ENCODE measurements at regions of chr17 and their contacts with region 1.

Region 1: DNA sequence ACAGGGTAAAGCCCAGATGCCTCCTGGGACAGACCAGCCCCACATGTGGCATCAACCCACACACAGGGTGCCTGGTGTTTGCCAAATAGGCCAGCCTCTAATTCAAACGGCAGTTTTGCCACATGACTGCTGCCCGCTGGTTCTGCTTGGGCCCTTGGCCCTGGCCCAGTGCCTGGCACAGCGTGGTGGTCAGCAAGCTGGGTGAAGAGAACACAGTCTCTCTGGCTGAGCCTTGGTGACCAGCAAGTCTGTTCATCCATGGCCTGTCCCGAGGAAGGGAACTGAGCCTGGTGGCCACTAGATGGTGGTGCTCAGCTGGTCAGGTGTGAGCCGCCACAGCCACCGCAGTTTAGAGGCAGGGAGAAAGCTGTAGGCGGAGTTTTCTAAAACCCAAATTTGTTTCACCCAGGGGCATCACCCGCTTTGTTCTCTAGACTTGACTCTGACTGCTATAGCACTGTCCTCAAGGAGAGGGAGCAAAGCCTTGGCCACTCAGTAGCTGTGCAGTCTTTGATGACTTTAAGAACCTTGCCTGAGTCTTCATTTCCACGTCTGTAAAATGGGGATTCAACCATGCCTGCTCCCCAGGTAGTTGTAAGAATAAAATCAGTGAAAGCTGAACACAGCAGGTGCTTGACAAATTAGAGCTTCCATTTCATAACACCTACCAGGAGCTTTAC is 4.7 kb upstream of the GFAP start:
- DNase-seq: peak; percentile 76
- H3K4me3 ChIP-seq: no peak overlapping the region
- H3K27ac ChIP-seq: no peak overlapping the region
- H3K4me1 ChIP-seq: peaks cover 8% of the 10 kb centered on the region
- H3K27me3 ChIP-seq: peaks cover 0 to 11% of the 10 kb centered on the region in 2 experiments
- CTCF ChIP-seq: peak; percentile 75 to 84
- POLR2A ChIP-seq: no peak

Region 2: DNA sequence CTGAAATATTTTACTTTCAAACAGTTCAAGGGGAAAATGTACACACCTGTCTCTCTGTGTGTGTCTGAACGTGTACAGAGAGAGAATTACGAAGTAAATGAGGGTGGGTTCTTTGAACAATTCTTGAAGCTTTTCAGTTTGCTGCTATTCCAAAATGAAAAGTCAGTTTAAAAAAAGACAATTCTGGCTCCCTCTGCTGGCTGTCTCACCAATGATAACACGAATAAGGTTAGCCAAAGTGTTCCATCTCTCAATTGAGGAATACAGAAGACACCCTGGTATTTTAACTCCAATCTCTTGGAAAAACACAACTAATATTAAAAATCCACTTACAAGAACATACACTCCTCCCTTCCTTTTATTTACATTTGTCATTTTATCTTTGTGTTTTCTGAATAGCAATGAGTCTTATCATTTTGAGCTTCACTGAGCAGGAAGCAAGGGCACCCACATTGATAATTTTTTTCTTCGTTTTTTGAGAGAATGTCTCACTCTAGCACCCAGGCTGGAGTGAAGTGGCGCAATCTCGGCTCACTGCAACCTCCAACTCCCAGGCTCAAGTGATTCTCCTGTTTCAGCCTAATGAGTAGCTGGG is 41.3 kb before region 1 on chr17:
- CTCF ChIA-PET with region 1: interaction called, 10 read pairs
- POLR2A ChIA-PET with region 1: no interaction called
- dilution Hi-C with region 1: no loop called
- intact Hi-C with region 1: no loop called
- DNase-seq: peak; percentile 49
- H3K4me3 ChIP-seq: no peak overlapping the region
- H3K27ac ChIP-seq: no peak overlapping the region
- H3K4me1 ChIP-seq: no peaks in the 10 kb centered on the region
- H3K27me3 ChIP-seq: no peaks in the 10 kb centered on the region
- CTCF ChIP-seq: peak; percentile 35 to 52
- POLR2A ChIP-seq: no peak

Region 3: DNA sequence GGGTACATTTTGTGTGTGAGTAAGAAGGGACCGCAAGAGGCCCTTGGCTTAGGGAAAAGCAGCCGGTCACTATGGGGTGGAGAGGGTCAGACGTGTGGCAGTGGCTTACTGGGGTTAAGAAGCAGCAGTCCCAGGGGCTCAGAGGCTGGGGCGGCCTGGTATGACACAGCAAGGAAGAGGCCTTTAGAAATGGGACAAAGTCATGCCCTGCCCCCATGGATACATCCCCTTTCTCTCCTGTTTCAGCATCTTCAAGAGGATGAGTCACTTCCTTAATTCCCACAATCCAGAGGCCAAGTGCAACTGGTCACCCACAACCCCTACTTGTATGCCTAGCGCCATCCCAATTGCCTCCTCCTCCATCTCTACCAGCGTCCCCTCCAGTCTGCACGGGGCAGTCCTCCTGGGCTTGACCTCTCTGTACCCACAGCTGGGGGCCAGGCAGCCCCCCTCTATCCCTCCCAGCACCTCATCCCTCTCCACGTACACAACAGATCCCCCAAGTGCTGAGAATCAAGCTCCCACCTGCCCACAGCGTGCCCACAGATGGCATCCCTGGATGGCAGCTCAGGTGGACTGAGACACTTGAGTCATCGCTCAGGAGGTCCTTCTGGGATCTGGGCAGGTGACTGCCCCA is 13.9 kb before region 1 on chr17:
- CTCF ChIA-PET with region 1: interaction called, 94 read pairs
- POLR2A ChIA-PET with region 1: no interaction called
- dilution Hi-C with region 1: no loop called
- intact Hi-C with region 1: loop called (anchors 1 kb)
- DNase-seq: peak; percentile 77
- H3K4me3 ChIP-seq: no peak overlapping the region
- H3K27ac ChIP-seq: peak overlapping the region; percentile 84
- H3K4me1 ChIP-seq: peaks cover 35% of the 10 kb centered on the region
- H3K27me3 ChIP-seq: no peaks in the 10 kb centered on the region
- CTCF ChIP-seq: no peak
- POLR2A ChIP-seq: peak; percentile 30

Region 4: GRCh38 chr17:44990994-44991393 is 71.0 kb after region 1 on chr17:
- CTCF ChIA-PET with region 1: interaction called, 10 read pairs
- POLR2A ChIA-PET with region 1: no interaction called
- dilution Hi-C with region 1: no loop called
- intact Hi-C with region 1: no loop called
- DNase-seq: no peak
- H3K4me3 ChIP-seq: no peak overlapping the region
- H3K27ac ChIP-seq: no peak overlapping the region
- H3K4me1 ChIP-seq: no peaks in the 10 kb centered on the region
- H3K27me3 ChIP-seq: peaks cover 0 to under 1% of the 10 kb centered on the region in 2 experiments
- CTCF ChIP-seq: no peak
- POLR2A ChIP-seq: no peak

Region 5: GRCh38 chr17:45021607-45022287 is 101.7 kb after region 1 on chr17:
- CTCF ChIA-PET with region 1: interaction called, 331 read pairs
- POLR2A ChIA-PET with region 1: interaction called, 5 read pairs
- dilution Hi-C with region 1: no loop called
- intact Hi-C with region 1: loop called (anchors 1 kb)
- DNase-seq: peak; percentile 38
- H3K4me3 ChIP-seq: peak overlapping the region in 1 of 3 experiments; percentile 30
- H3K27ac ChIP-seq: no peak overlapping the region
- H3K4me1 ChIP-seq: peaks cover 17% of the 10 kb centered on the region
- H3K27me3 ChIP-seq: no peaks in the 10 kb centered on the region
- CTCF ChIP-seq: peak; percentile 76 to 98
- POLR2A ChIP-seq: no peak